ENCODE measurements at regions of chr11 and their contacts with region 1.

Region 1: GRCh38 chr11:3021125-3021524 is 29.0 kb upstream of the NAP1L4 start:
- DNase-seq: peak in 8 of 9 experiments; percentile 24 to 75 (median 61)
- ATAC-seq: peak; percentile 83
- H3K4me3 ChIP-seq: no peak overlapping the region
- H3K4me3 Mint-ChIP-seq: no peak overlapping the region
- H3K27ac ChIP-seq: no peak overlapping the region
- H3K27ac Mint-ChIP-seq: no peak overlapping the region
- H3K4me1 ChIP-seq: peaks cover 56% of the 10 kb centered on the region
- H3K4me1 Mint-ChIP-seq: peaks cover 64% of the 10 kb centered on the region
- H3K27me3 ChIP-seq: no peaks in the 10 kb centered on the region
- H3K27me3 Mint-ChIP-seq: no peaks in the 10 kb centered on the region
- CTCF ChIP-seq: peak; percentile 75

Region 2: DNA sequence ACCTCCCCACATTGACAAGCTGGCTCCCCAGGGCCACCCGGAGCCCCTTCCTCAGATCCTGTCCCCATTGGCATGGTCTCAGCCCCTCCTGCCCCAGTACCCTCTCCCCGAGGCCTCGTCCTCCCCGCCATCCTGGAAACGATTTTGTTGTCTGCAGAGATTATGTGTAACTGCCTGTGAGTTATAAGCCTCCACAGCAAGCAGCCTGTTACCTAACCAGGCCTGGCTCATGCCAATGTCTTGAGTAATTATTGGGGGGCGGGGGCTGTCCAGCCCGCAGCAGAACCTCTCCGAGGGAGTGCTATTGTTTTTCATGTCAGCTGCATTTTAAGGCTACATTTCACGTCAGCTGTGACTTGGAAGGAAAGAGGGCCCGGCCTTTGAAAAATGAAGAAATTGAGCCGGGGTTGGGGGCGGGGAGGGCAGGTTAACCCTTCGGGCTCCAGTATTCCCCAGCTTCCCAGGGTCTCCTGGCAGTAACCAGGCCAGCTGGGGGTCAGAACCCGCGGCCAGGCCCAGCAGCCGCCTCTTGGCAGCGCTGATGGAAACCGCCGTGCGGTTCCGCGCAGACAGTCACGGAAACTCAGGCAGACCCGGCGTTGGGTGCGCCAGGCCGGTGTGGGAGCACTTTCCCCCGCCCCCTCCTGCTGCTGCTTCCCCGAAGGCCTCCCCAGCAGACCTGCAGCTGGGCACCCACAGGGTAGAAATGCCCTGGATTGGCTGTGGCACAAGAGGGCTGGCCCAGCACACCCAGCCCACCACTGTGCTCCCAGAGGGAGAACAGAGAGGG is 195.0 kb before region 1 on chr11:
- CTCF ChIA-PET with region 1: no interaction called
- POLR2A ChIA-PET with region 1: no interaction called
- intact Hi-C with region 1: no loop called
- DNase-seq: no peak
- ATAC-seq: no peak
- H3K4me3 ChIP-seq: no peak overlapping the region
- H3K4me3 Mint-ChIP-seq: no peak overlapping the region
- H3K27ac ChIP-seq: no peak overlapping the region
- H3K27ac Mint-ChIP-seq: no peak overlapping the region
- H3K4me1 ChIP-seq: no peaks in the 10 kb centered on the region
- H3K4me1 Mint-ChIP-seq: peaks cover 5% of the 10 kb centered on the region
- H3K27me3 ChIP-seq: no peaks in the 10 kb centered on the region
- H3K27me3 Mint-ChIP-seq: peaks cover 4% of the 10 kb centered on the region
- CTCF ChIP-seq: no peak

Region 3: DNA sequence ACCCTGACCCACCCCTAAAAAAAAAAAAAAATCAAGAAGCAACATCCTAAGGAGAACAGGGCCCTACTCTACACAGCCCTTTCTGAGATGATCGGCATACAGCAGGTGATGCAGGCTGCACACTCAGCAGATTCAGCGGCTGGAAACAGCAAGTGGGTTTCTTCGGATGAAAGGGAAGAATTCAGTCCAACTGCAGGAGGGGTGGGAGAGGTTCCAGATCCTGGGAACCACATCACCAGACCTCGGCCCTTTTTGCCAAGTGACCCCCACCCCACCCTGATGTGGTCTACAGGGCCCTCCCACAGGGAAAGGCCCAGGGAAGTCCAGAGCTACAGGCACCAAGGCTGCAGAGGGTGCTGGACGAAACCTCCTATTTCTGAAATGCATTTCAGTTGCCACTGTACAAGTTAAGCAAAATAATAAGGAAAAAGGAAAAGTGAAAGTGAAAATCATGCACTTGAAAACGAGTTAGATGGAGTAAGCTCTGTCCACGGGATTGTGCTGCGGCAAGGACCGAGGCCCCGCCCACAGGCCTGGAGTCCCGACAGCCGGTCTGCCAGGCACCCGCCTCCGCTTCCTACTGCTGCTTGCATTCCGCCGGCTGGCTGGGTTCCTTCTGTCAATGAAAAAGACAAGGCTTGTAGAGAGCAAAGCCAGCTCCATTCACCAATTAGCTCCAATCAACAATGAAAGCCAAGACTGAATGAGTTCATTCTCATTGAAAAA is 75.9 kb before region 1 on chr11:
- CTCF ChIA-PET with region 1: interaction called, 10 read pairs
- POLR2A ChIA-PET with region 1: interaction called, 4 read pairs
- intact Hi-C with region 1: no loop called
- DNase-seq: peak in 4 of 9 experiments; percentile 44 to 63 (median 51)
- ATAC-seq: peak; percentile 40
- H3K4me3 ChIP-seq: no peak overlapping the region
- H3K4me3 Mint-ChIP-seq: peak overlapping the region; percentile 56
- H3K27ac ChIP-seq: peak overlapping the region in 1 of 2 experiments; percentile 1
- H3K27ac Mint-ChIP-seq: peak overlapping the region; percentile 76
- H3K4me1 ChIP-seq: peaks cover 35% of the 10 kb centered on the region
- H3K4me1 Mint-ChIP-seq: peaks cover 49% of the 10 kb centered on the region
- H3K27me3 ChIP-seq: no peaks in the 10 kb centered on the region
- H3K27me3 Mint-ChIP-seq: no peaks in the 10 kb centered on the region
- CTCF ChIP-seq: no peak

Region 4: GRCh38 chr11:2968341-2968900 is 52.7 kb before region 1 on chr11:
- CTCF ChIA-PET with region 1: interaction called, 92 read pairs
- POLR2A ChIA-PET with region 1: interaction called, 3 read pairs
- intact Hi-C with region 1: no loop called
- DNase-seq: no peak
- ATAC-seq: no peak
- H3K4me3 ChIP-seq: no peak overlapping the region
- H3K4me3 Mint-ChIP-seq: no peak overlapping the region
- H3K27ac ChIP-seq: no peak overlapping the region
- H3K27ac Mint-ChIP-seq: no peak overlapping the region
- H3K4me1 ChIP-seq: no peaks in the 10 kb centered on the region
- H3K4me1 Mint-ChIP-seq: peaks cover 38% of the 10 kb centered on the region
- H3K27me3 ChIP-seq: no peaks in the 10 kb centered on the region
- H3K27me3 Mint-ChIP-seq: no peaks in the 10 kb centered on the region
- CTCF ChIP-seq: no peak

Region 5: GRCh38 chr11:2982214-2982613 is 38.9 kb before region 1 on chr11:
- CTCF ChIA-PET with region 1: interaction called, 58 read pairs
- POLR2A ChIA-PET with region 1: interaction called, 132 read pairs
- intact Hi-C with region 1: no loop called
- DNase-seq: no peak
- ATAC-seq: no peak
- H3K4me3 ChIP-seq: no peak overlapping the region
- H3K4me3 Mint-ChIP-seq: peak overlapping the region; percentile 57
- H3K27ac ChIP-seq: peak overlapping the region in 1 of 2 experiments; percentile 46
- H3K27ac Mint-ChIP-seq: peak overlapping the region; percentile 90
- H3K4me1 ChIP-seq: peaks cover 80% of the 10 kb centered on the region
- H3K4me1 Mint-ChIP-seq: peaks cover 79% of the 10 kb centered on the region
- H3K27me3 ChIP-seq: no peaks in the 10 kb centered on the region
- H3K27me3 Mint-ChIP-seq: no peaks in the 10 kb centered on the region
- CTCF ChIP-seq: no peak

Region 6: GRCh38 chr11:3006505-3007183 is 14.5 kb before region 1 on chr11:
- CTCF ChIA-PET with region 1: interaction called, 13 read pairs
- POLR2A ChIA-PET with region 1: interaction called, 5 read pairs
- intact Hi-C with region 1: no loop called
- DNase-seq: peak; percentile 33 to 83 (median 74)
- ATAC-seq: peak; percentile 99
- H3K4me3 ChIP-seq: peak overlapping the region; percentile 45 to 57
- H3K4me3 Mint-ChIP-seq: peak overlapping the region; percentile 89
- H3K27ac ChIP-seq: peak overlapping the region in 1 of 2 experiments; percentile 52
- H3K27ac Mint-ChIP-seq: peak overlapping the region; percentile 91
- H3K4me1 ChIP-seq: peaks cover 46% of the 10 kb centered on the region
- H3K4me1 Mint-ChIP-seq: peaks cover 69% of the 10 kb centered on the region
- H3K27me3 ChIP-seq: no peaks in the 10 kb centered on the region
- H3K27me3 Mint-ChIP-seq: no peaks in the 10 kb centered on the region
- CTCF ChIP-seq: no peak

Measured in CD8-positive, alpha-beta T cell (primary cell).